Naive thymus-derived CD8-positive, alpha-beta T cell (primary cell): ENCODE measurements at regions of chr19 and their contacts with region 1.

Region 1: DNA sequence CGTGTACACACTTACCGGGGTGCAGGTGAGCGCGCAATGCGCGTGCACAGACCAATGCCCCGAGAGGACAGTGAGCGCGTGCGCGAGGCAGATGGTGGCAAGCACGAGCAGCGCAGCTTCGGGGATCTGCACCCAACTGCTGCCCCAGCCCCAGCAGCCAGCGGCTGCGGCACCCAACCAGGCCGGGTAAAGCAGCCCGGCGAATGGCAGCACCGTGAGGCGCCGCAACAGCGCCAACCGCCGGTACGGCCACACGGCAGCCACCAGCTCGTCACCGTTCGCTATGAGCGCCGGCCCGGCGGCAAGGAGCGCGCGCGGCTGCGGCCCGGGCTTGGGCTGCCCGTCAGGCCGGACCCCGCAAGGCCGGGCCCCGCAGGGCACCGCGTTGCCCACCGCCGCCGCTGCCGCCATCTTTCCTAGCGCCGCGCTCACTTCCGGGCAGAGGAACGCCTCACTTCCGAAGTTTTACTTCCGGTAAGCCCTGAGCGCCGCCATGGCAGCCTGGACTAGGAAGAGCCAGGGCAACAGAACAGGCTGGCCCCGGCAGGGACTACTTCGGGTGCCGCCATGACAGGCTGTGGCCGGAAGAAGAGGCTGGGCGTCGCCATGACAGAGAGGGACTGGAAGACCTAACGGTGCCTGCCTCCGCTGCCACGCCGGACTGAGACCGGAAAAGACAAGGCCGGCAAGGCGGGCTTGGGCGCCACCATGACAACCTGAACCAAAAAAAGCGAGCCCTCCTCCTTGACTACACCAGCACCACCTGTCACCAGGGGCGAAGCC is at the start of gene ATP13A1:
- DNase-seq: peak; percentile 81 to 98 (median 93)
- ATAC-seq: peak; percentile 73 to 76
- H3K4me3 Mint-ChIP-seq: peak within 1 kb of the TSS; percentile 83 to 97 (median 94)
- H3K27ac Mint-ChIP-seq: peak within 1 kb of the TSS; percentile 93 to 100 (median 98)
- H3K4me1 Mint-ChIP-seq: peaks cover 23 to 50% (median 40%) of the 10 kb centered on the region in 4 donors
- H3K27me3 Mint-ChIP-seq: peaks cover 0 to 3% (median 0%) of the 10 kb centered on the region in 5 donors
- polyA plus RNA-seq, gene ATP13A1: 15.3 to 46.7 (median 20.7) TPM

Region 2: DNA sequence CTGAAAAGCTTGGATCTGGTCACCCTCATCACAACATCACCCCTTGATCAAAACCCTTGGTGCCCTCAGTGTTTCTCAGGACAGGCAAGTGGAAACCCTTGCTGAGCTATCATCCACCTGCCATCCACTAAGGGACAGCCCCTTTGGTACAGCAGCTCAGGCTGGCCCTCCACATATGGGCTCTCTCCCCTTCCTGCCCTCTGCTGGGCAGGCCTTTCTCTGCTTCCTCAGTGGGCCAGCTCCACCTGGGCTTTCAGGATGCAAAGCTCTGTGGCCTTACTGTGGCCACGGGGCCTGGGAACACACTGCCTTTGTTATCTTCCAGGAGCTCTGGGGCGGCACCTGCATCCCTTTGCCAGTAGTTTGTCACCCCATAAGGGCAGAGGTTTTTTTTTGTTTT is 348.0 kb before region 1 on chr19:
- POLR2A ChIA-PET with region 1: no interaction called
- DNase-seq: no peak
- ATAC-seq: no peak
- H3K4me3 Mint-ChIP-seq: no peak overlapping the region
- H3K27ac Mint-ChIP-seq: peak overlapping the region in 3 of 10 donors; percentile 20 to 85 (median 76)
- H3K4me1 Mint-ChIP-seq: peaks cover 11 to 45% (median 30%) of the 10 kb centered on the region in 4 donors
- H3K27me3 Mint-ChIP-seq: no peaks in the 10 kb centered on the region

Region 3: DNA sequence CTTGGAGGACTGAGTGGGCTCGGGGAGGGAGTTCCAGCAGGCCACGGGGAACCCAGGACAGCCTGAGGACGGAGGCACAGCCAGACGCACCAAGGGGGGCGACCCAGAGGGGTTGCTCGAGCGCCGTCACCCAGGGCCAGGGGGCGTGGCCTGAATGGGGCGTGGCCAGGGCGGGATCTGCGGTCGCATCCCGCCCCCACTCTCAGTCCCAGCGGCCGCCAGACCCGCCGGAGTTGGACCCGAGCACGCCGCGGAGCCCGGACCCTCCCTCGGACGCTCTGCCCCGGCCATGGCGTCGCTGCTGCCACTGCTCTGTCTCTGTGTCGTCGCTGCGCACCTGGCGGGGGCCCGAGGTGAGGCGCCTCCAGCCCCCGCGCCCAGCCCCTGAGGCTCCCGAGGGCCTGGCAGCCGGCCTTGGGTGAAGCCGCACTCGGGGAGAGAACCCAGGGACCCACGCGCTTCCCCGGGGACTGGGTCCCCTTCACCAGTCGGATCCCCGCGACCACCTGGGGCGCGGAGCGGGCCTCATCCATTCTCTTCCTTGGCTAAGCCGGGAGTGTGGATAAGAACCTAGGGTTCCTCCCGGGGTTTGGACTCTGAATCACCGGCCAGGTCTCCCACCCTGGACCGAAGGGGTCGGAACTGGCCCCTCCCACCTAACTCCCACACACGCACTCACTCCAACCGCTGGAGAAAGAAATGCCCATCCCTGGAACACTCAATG is 125.2 kb before region 1 on chr19 and contains the start of gene CILP2:
- POLR2A ChIA-PET with region 1: interaction called, 18 read pairs
- DNase-seq: peak in 9 of 10 donors; percentile 27 to 78 (median 39)
- ATAC-seq: peak; percentile 34 to 47
- H3K4me3 Mint-ChIP-seq: peak within 1 kb of the TSS; percentile 68 to 91 (median 74)
- H3K27ac Mint-ChIP-seq: peak within 1 kb of the TSS in 9 of 10 donors; percentile 26 to 86 (median 62)
- H3K4me1 Mint-ChIP-seq: peaks cover 23 to 45% (median 38%) of the 10 kb centered on the region in 4 donors
- H3K27me3 Mint-ChIP-seq: peaks cover 0 to 6% (median 0%) of the 10 kb centered on the region in 5 donors
- polyA plus RNA-seq, gene CILP2: 0.56 to 0.64 TPM in 2 of 3 donors, not detected in the other

Region 4: DNA sequence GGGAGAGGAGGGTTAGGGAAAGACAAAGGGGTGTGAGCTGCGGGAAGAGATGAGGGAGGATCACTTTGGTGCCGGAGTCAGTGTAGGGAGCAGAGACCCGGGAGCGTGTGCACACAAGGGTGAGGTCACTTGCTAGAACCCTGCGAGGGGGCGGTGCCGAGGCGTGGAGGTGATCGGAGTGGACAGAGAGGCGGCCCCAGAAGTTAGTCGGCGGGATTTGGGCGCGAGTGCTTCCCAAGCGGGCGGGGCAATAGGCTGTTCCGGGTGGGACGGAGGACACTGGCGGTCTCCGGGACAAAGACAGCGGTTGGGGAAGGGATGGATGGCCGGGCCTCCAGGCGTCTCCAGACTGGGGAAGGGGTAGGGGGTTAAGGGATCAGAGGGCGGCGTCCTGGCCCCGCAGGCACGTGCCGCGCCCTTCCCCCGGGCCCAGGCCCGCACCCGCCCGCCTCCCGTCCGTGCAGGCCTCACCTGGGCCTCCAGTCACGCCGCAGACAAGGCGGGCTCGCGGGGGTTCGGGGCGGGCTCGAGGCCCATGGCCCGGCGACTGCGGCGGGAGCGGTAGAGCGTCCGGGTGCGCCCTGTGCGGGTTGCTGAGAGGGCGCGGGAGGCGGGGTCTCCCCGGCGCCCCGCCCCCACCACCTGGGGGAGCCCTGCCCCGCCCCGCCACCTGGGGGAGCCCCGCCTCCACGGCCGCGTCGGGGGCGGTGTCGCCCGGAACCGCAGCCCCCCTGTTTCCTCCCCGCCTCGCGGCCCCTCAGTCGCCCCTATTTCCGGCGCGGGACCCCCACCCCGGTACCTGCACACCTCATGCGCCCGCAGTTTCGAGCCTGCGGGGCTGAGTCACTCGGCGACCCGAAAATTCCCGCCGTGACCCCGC is 35.6 kb before region 1 on chr19 and contains the start of gene LPAR2:
- POLR2A ChIA-PET with region 1: interaction called, 47 read pairs
- DNase-seq: peak; percentile 77 to 93 (median 84)
- ATAC-seq: peak; percentile 80 to 84
- H3K4me3 Mint-ChIP-seq: peak within 1 kb of the TSS; percentile 85 to 99 (median 98)
- H3K27ac Mint-ChIP-seq: peak within 1 kb of the TSS; percentile 93 to 99 (median 96)
- H3K4me1 Mint-ChIP-seq: peaks cover 15 to 38% (median 27%) of the 10 kb centered on the region in 4 donors
- H3K27me3 Mint-ChIP-seq: no peaks in the 10 kb centered on the region
- polyA plus RNA-seq, gene LPAR2: 12.9 to 38.0 (median 16.7) TPM

Region 5: DNA sequence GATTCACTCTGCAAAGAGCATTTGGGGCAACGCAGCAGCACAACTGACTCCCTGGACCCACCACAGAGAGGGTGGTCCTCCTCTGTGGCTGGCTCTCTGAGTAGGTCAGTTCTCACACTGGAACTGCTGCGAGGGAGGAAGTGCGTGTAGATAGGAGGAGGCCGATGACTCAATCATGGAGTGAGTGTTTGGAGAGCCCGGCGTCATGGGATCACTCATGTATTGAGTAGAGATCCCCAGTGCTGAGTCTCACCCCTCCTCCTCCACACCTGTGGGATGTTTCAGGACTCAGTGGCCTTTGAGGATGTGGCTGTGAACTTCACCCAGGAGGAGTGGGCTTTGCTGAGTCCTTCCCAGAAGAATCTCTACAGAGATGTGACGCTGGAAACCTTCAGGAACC is 14.1 kb after region 1 on chr19:
- POLR2A ChIA-PET with region 1: interaction called, 35 read pairs
- DNase-seq: peak in 1 of 10 donors; percentile 44
- ATAC-seq: no peak
- H3K4me3 Mint-ChIP-seq: peak overlapping the region in 8 of 10 donors; percentile 7 to 63 (median 40)
- H3K27ac Mint-ChIP-seq: peak overlapping the region in 4 of 10 donors; percentile 3 to 74 (median 56)
- H3K4me1 Mint-ChIP-seq: peaks cover 5 to 28% (median 18%) of the 10 kb centered on the region in 4 donors
- H3K27me3 Mint-ChIP-seq: no peaks in the 10 kb centered on the region

Region 6: DNA sequence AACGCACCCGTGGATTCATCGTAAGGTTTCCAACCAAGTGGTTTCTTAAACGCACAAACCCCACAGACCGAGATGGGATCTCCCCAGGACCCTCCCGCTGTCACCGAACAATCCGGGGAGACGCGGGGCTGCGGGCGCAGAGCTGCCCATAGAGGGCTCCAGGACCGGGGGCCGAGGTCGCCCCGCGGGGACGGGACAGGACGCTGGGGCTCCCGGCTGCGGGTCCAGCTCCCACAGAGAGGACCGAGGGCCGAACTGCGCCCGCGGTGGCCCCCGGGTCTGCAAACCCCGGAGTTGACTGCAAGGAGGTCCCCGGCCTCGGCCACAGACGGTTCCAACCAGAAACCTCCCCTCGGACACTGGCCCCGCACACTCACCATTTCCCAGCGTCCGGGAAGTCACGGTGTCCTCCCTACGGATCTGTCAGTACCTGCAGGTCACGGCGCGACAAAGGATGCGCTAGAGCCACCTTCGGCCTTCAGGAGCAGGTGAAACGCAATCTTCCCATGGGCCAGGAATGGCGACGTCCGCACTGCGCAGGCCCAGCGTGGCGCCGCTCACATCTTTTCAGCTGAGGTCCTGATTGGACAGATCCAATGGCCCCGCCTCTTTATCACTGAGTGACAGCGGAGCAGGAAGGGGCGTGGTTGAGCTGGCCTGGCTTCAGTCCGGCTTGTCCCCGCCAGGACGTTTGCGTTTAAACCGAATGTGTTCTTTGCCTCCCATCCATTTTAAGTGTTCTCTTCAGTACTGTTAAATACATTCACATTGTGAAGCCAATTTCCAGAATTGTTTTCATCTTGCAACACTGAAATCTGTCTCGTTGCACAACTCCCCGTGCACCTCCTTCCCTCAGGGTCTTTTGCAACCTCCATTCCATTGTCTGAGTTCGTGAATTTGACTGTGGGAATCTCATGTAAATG is 69.4 kb after region 1 on chr19 and contains the start of gene ZNF14:
- POLR2A ChIA-PET with region 1: interaction called, 289 read pairs
- DNase-seq: peak; percentile 79 to 96 (median 89)
- ATAC-seq: peak; percentile 96 to 99
- H3K4me3 Mint-ChIP-seq: peak within 1 kb of the TSS; percentile 94 to 100 (median 98)
- H3K27ac Mint-ChIP-seq: peak within 1 kb of the TSS; percentile 89 to 99 (median 98)
- H3K4me1 Mint-ChIP-seq: peaks cover 7 to 38% (median 27%) of the 10 kb centered on the region in 4 donors
- H3K27me3 Mint-ChIP-seq: no peaks in the 10 kb centered on the region
- polyA plus RNA-seq, gene ZNF14: 8.2 to 16.3 (median 11.4) TPM

Region 7: GRCh38 chr19:19865739-19866481 is 202.5 kb after region 1 on chr19 and contains the start of gene ZNF253:
- POLR2A ChIA-PET with region 1: interaction called, 121 read pairs
- DNase-seq: peak; percentile 84 to 97 (median 93)
- ATAC-seq: peak; percentile 89 to 91
- H3K4me3 Mint-ChIP-seq: peak within 1 kb of the TSS; percentile 99 to 100 (median 100)
- H3K27ac Mint-ChIP-seq: peak within 1 kb of the TSS; percentile 96 to 99 (median 99)
- H3K4me1 Mint-ChIP-seq: peaks cover 8 to 42% (median 31%) of the 10 kb centered on the region in 4 donors
- H3K27me3 Mint-ChIP-seq: no peaks in the 10 kb centered on the region
- polyA plus RNA-seq, gene ZNF253: 7.1 to 9.4 (median 8.9) TPM